ENCODE measurements at regions of chr18 and their contacts with region 1.

Region 1: GRCh38 chr18:38940863-38941531 is 1375.4 kb upstream of the CELF4 start:
- DNase-seq: peak in 8 of 9 experiments; percentile 10 to 92 (median 48)
- ATAC-seq: peak; percentile 77
- H3K4me3 ChIP-seq: peak overlapping the region in 1 of 2 experiments; percentile 50
- H3K4me3 Mint-ChIP-seq: peak overlapping the region; percentile 77
- H3K27ac ChIP-seq: peak overlapping the region; percentile 29 to 87
- H3K27ac Mint-ChIP-seq: peak overlapping the region; percentile 88
- H3K4me1 ChIP-seq: peaks cover 10% of the 10 kb centered on the region
- H3K4me1 Mint-ChIP-seq: peaks cover 32% of the 10 kb centered on the region
- H3K27me3 ChIP-seq: no peaks in the 10 kb centered on the region
- H3K27me3 Mint-ChIP-seq: no peaks in the 10 kb centered on the region
- CTCF ChIP-seq: no peak

Region 2: GRCh38 chr18:38575648-38576047 is 365.3 kb before region 1 on chr18:
- CTCF ChIA-PET with region 1: no interaction called
- POLR2A ChIA-PET with region 1: no interaction called
- intact Hi-C with region 1: loop called in 1 of 2 experiments (anchors 10 kb)
- DNase-seq: peak in 2 of 9 experiments; percentile 20 to 48
- ATAC-seq: peak; percentile 65
- H3K4me3 ChIP-seq: no peak overlapping the region
- H3K4me3 Mint-ChIP-seq: peak overlapping the region; percentile 53
- H3K27ac ChIP-seq: peak overlapping the region in 1 of 2 experiments; percentile 29
- H3K27ac Mint-ChIP-seq: peak overlapping the region; percentile 23
- H3K4me1 ChIP-seq: peaks cover 24% of the 10 kb centered on the region
- H3K4me1 Mint-ChIP-seq: peaks cover 31% of the 10 kb centered on the region
- H3K27me3 ChIP-seq: no peaks in the 10 kb centered on the region
- H3K27me3 Mint-ChIP-seq: no peaks in the 10 kb centered on the region
- CTCF ChIP-seq: no peak

Region 3: GRCh38 chr18:38895560-38895959 is 45.4 kb before region 1 on chr18:
- CTCF ChIA-PET with region 1: no interaction called
- POLR2A ChIA-PET with region 1: no interaction called
- intact Hi-C with region 1: no loop called
- DNase-seq: no peak
- ATAC-seq: no peak
- H3K4me3 ChIP-seq: no peak overlapping the region
- H3K4me3 Mint-ChIP-seq: no peak overlapping the region
- H3K27ac ChIP-seq: no peak overlapping the region
- H3K27ac Mint-ChIP-seq: no peak overlapping the region
- H3K4me1 ChIP-seq: no peaks in the 10 kb centered on the region
- H3K4me1 Mint-ChIP-seq: no peaks in the 10 kb centered on the region
- H3K27me3 ChIP-seq: no peaks in the 10 kb centered on the region
- H3K27me3 Mint-ChIP-seq: no peaks in the 10 kb centered on the region
- CTCF ChIP-seq: no peak

Region 4: GRCh38 chr18:40413160-40413559 is 1472.2 kb after region 1 on chr18:
- CTCF ChIA-PET with region 1: no interaction called
- POLR2A ChIA-PET with region 1: no interaction called
- intact Hi-C with region 1: no loop called
- DNase-seq: no peak
- ATAC-seq: no peak
- H3K4me3 ChIP-seq: no peak overlapping the region
- H3K4me3 Mint-ChIP-seq: no peak overlapping the region
- H3K27ac ChIP-seq: no peak overlapping the region
- H3K27ac Mint-ChIP-seq: no peak overlapping the region
- H3K4me1 ChIP-seq: no peaks in the 10 kb centered on the region
- H3K4me1 Mint-ChIP-seq: no peaks in the 10 kb centered on the region
- H3K27me3 ChIP-seq: no peaks in the 10 kb centered on the region
- H3K27me3 Mint-ChIP-seq: no peaks in the 10 kb centered on the region
- CTCF ChIP-seq: no peak